ENCODE measurements at regions of chr2 and their contacts with region 1.

Region 1: GRCh38 chr2:60498816-60499429 is 54.5 kb downstream of the BCL11A start:
- DNase-seq: no peak
- H3K4me3 ChIP-seq: no peak overlapping the region
- H3K4me3 Mint-ChIP-seq: no peak overlapping the region
- H3K27ac ChIP-seq: peak overlapping the region in 1 of 2 donors; percentile 54
- H3K27ac Mint-ChIP-seq: peak overlapping the region in 5 of 7 donors; percentile 57 to 80 (median 65)
- H3K4me1 ChIP-seq: peaks cover 19 to 26% of the 10 kb centered on the region in 2 donors
- H3K4me1 Mint-ChIP-seq: peaks cover 41% of the 10 kb centered on the region
- H3K27me3 ChIP-seq: no peaks in the 10 kb centered on the region
- H3K27me3 Mint-ChIP-seq: peaks cover 0 to 1% (median 0%) of the 10 kb centered on the region in 3 donors
- CTCF ChIP-seq: no peak

Region 2: GRCh38 chr2:58633576-58634365 is 1865.2 kb before region 1 on chr2:
- intact Hi-C with region 1: no loop called
- DNase-seq: no peak
- H3K4me3 ChIP-seq: no peak overlapping the region
- H3K4me3 Mint-ChIP-seq: no peak overlapping the region
- H3K27ac ChIP-seq: no peak overlapping the region
- H3K27ac Mint-ChIP-seq: no peak overlapping the region
- H3K4me1 ChIP-seq: no peaks in the 10 kb centered on the region
- H3K4me1 Mint-ChIP-seq: no peaks in the 10 kb centered on the region
- H3K27me3 ChIP-seq: no peaks in the 10 kb centered on the region
- H3K27me3 Mint-ChIP-seq: peaks cover 0 to 2% (median 0%) of the 10 kb centered on the region in 3 donors
- CTCF ChIP-seq: no peak

Region 3: GRCh38 chr2:60317844-60318243 is 181.1 kb before region 1 on chr2:
- intact Hi-C with region 1: no loop called
- DNase-seq: peak; percentile 30 to 44 (median 34)
- H3K4me3 ChIP-seq: peak overlapping the region in 1 of 3 experiments; percentile 38
- H3K4me3 Mint-ChIP-seq: peak overlapping the region; percentile 28 to 82
- H3K27ac ChIP-seq: peak overlapping the region in 1 of 2 donors; percentile 51
- H3K27ac Mint-ChIP-seq: peak overlapping the region; percentile 2 to 74 (median 65)
- H3K4me1 ChIP-seq: peaks cover 24 to 29% of the 10 kb centered on the region in 2 donors
- H3K4me1 Mint-ChIP-seq: peaks cover 39% of the 10 kb centered on the region
- H3K27me3 ChIP-seq: no peaks in the 10 kb centered on the region
- H3K27me3 Mint-ChIP-seq: peaks cover 0 to 3% (median 0%) of the 10 kb centered on the region in 3 donors
- CTCF ChIP-seq: no peak

Region 4: GRCh38 chr2:60446413-60447267 is 52.3 kb before region 1 on chr2:
- intact Hi-C with region 1: loop called in 1 of 2 experiments (anchors 10 kb)
- DNase-seq: peak in 2 of 3 donors; percentile 10 to 53
- H3K4me3 ChIP-seq: no peak overlapping the region
- H3K4me3 Mint-ChIP-seq: no peak overlapping the region
- H3K27ac ChIP-seq: no peak overlapping the region
- H3K27ac Mint-ChIP-seq: peak overlapping the region in 2 of 7 donors; percentile 40 to 81
- H3K4me1 ChIP-seq: peaks cover 13 to 27% of the 10 kb centered on the region in 2 donors
- H3K4me1 Mint-ChIP-seq: peaks cover 38% of the 10 kb centered on the region
- H3K27me3 ChIP-seq: no peaks in the 10 kb centered on the region
- H3K27me3 Mint-ChIP-seq: peaks cover 0 to 2% (median 1%) of the 10 kb centered on the region in 3 donors
- CTCF ChIP-seq: no peak

Region 5: GRCh38 chr2:60530660-60531281 is 31.8 kb after region 1 on chr2:
- intact Hi-C with region 1: loop called in 1 of 2 experiments (anchors 5 kb)
- DNase-seq: peak in 2 of 3 donors; percentile 54 to 63
- H3K4me3 ChIP-seq: peak overlapping the region in 1 of 3 experiments; percentile 47
- H3K4me3 Mint-ChIP-seq: peak overlapping the region; percentile 59 to 84
- H3K27ac ChIP-seq: peak overlapping the region; percentile 65 to 75
- H3K27ac Mint-ChIP-seq: peak overlapping the region; percentile 62 to 96 (median 88)
- H3K4me1 ChIP-seq: peaks cover 85 to 86% of the 10 kb centered on the region in 2 donors
- H3K4me1 Mint-ChIP-seq: peaks cover 97% of the 10 kb centered on the region
- H3K27me3 ChIP-seq: no peaks in the 10 kb centered on the region
- H3K27me3 Mint-ChIP-seq: peaks cover 0 to 2% (median 0%) of the 10 kb centered on the region in 3 donors
- CTCF ChIP-seq: no peak

Region 6: DNA sequence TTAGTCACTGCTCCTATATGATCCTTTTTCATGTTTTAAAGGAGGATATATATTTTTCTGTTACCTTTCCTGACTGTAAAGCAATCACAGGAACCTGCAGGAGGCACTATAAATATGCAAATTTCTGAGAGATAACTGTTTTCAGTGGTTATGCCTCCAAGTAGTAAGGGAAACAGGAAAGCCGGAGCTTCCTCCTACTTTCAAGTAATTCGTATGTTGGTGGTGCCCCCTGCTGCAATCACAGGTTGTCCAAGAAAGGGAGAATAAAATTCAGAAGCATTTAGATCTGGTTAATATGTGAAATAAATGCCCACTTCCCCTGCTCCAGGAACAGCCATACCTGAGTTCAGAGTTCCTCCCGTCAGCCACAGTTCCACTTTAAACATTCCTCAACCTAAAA is 66.5 kb after region 1 on chr2:
- intact Hi-C with region 1: no loop called
- DNase-seq: peak in 2 of 3 donors; percentile 49 to 54
- H3K4me3 ChIP-seq: no peak overlapping the region
- H3K4me3 Mint-ChIP-seq: no peak overlapping the region
- H3K27ac ChIP-seq: no peak overlapping the region
- H3K27ac Mint-ChIP-seq: no peak overlapping the region
- H3K4me1 ChIP-seq: peaks cover 27% of the 10 kb centered on the region in 2 donors
- H3K4me1 Mint-ChIP-seq: peaks cover 19% of the 10 kb centered on the region
- H3K27me3 ChIP-seq: peaks cover 22 to 33% of the 10 kb centered on the region in 2 donors
- H3K27me3 Mint-ChIP-seq: peaks cover 2 to 9% (median 5%) of the 10 kb centered on the region in 3 donors
- CTCF ChIP-seq: peak; percentile 59